ENCODE measurements at regions of chrX and their contacts with region 1.

Region 1: GRCh38 chrX:86133761-86134160 is 14.5 kb upstream of the DACH2 start:
- DNase-seq: no peak
- ATAC-seq: no peak
- H3K4me3 ChIP-seq: no peak overlapping the region
- H3K4me3 Mint-ChIP-seq: no peak overlapping the region
- H3K27ac ChIP-seq: no peak overlapping the region
- H3K27ac Mint-ChIP-seq: no peak overlapping the region
- H3K4me1 ChIP-seq: no peaks in the 10 kb centered on the region
- H3K4me1 Mint-ChIP-seq: peaks cover 0 to 4% (median 0%) of the 10 kb centered on the region in 7 donors
- H3K27me3 ChIP-seq: no peaks in the 10 kb centered on the region
- H3K27me3 Mint-ChIP-seq: peaks cover 0 to 8% (median 2%) of the 10 kb centered on the region in 5 donors

Region 2: GRCh38 chrX:86078650-86079049 is 55.1 kb before region 1 on chrX:
- CTCF ChIA-PET with region 1: no interaction called
- POLR2A ChIA-PET with region 1: no interaction called
- intact Hi-C with region 1: no loop called
- DNase-seq: no peak
- ATAC-seq: no peak
- H3K4me3 ChIP-seq: no peak overlapping the region
- H3K4me3 Mint-ChIP-seq: no peak overlapping the region
- H3K27ac ChIP-seq: no peak overlapping the region
- H3K27ac Mint-ChIP-seq: no peak overlapping the region
- H3K4me1 ChIP-seq: no peaks in the 10 kb centered on the region
- H3K4me1 Mint-ChIP-seq: no peaks in the 10 kb centered on the region
- H3K27me3 ChIP-seq: no peaks in the 10 kb centered on the region
- H3K27me3 Mint-ChIP-seq: peaks cover 0 to 14% (median 13%) of the 10 kb centered on the region in 5 donors

Region 3: DNA sequence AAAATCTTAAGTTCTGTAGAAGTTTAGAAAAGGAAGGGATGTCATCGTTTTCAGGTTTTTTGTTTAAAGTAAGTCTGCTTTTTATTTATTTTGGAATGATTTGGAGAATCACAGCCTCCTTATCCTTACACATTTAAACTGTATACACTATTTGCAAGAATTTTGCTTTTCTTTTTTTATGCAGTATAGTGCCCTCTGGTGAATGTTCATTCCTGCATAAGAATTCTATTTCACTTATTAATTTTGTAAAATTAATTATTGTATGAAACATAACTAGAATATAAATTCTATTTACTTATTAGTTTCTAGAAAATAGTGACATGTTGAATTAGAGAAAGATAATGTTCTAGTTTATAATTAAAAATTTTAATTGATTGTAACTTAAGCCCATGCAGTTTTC is 59.1 kb after region 1 on chrX:
- CTCF ChIA-PET with region 1: no interaction called
- POLR2A ChIA-PET with region 1: no interaction called
- intact Hi-C with region 1: loop called in 1 of 2 experiments (anchors 1 kb)
- DNase-seq: no peak
- ATAC-seq: no peak
- H3K4me3 ChIP-seq: no peak overlapping the region
- H3K4me3 Mint-ChIP-seq: no peak overlapping the region
- H3K27ac ChIP-seq: no peak overlapping the region
- H3K27ac Mint-ChIP-seq: no peak overlapping the region
- H3K4me1 ChIP-seq: no peaks in the 10 kb centered on the region
- H3K4me1 Mint-ChIP-seq: no peaks in the 10 kb centered on the region
- H3K27me3 ChIP-seq: no peaks in the 10 kb centered on the region
- H3K27me3 Mint-ChIP-seq: no peaks in the 10 kb centered on the region

Region 4: GRCh38 chrX:87664381-87664780 is 1530.6 kb after region 1 on chrX:
- CTCF ChIA-PET with region 1: no interaction called
- POLR2A ChIA-PET with region 1: no interaction called
- intact Hi-C with region 1: loop called in 1 of 2 experiments (anchors 10 kb)
- DNase-seq: no peak
- ATAC-seq: no peak
- H3K4me3 ChIP-seq: no peak overlapping the region
- H3K4me3 Mint-ChIP-seq: no peak overlapping the region
- H3K27ac ChIP-seq: no peak overlapping the region
- H3K27ac Mint-ChIP-seq: no peak overlapping the region
- H3K4me1 ChIP-seq: no peaks in the 10 kb centered on the region
- H3K4me1 Mint-ChIP-seq: no peaks in the 10 kb centered on the region
- H3K27me3 ChIP-seq: no peaks in the 10 kb centered on the region
- H3K27me3 Mint-ChIP-seq: no peaks in the 10 kb centered on the region

Measured in naive thymus-derived CD4-positive, alpha-beta T cell (primary cell).